ENCODE measurements at regions of chr1 and their contacts with region 1.

Region 1: DNA sequence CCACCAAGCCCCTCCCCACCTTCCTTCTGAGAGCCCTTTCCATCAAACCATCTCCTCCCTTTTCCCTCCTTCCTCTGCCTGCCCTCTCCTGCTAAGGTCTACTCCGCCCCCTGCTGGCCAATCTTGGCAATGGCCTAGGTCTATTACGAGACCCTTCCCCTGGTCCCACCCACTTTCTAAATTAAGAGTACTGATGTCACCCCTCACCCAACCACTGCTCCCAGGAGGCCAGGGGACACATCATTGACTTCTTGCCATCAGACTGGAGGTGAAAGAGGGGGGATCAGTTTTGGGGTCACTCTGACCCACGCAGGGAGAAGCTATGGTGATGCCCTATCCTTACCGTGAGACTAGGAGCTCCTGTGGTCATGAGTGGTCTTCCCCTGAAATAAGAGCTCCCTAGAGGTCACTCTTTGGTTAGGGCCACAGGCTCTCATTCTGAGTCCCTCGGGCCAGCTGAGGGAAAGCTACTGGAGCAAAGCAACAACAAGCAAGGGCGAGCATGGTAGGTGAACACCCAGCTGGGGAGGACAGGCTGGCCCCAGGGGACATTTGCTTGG is 34.6 kb upstream of the S100A7 start:
- DNase-seq: peak; percentile 75 to 82 (median 79)
- ATAC-seq: peak; percentile 96
- H3K4me3 ChIP-seq: no peak overlapping the region
- H3K27ac ChIP-seq: no peak overlapping the region
- H3K4me1 ChIP-seq: no peaks in the 10 kb centered on the region
- H3K27me3 ChIP-seq: peaks cover 11 to 21% of the 10 kb centered on the region in 2 experiments; a peak in 4 of 5 replicates
- CTCF ChIP-seq: peak; percentile 88 to 94 (median 93)
- EP300 ChIP-seq: no peak
- POLR2A ChIP-seq: no peak
- RAD21 ChIP-seq: peak; percentile 93 to 98

Region 2: DNA sequence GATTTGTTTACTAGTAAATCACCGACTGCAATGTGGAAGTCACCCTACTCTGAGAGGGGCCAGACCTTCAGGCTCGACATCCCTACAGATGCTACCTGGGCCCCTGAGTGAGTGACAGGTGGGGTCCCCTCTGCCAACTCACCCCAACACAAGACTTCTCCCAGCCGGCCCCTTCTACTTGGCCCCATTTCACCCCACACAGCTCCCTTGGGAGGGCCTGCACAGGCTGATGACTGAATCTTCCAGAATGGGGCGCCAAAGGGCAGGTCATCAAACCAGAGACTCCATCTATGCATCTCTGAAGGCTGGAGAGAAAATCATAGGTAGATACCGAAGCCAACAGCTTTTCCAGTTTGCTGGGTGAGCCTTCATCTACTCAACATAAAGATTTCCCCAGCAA is 94.8 kb before region 1 on chr1:
- CTCF ChIA-PET with region 1: interaction called, 28 read pairs
- POLR2A ChIA-PET with region 1: interaction called, 7 read pairs
- in situ Hi-C with region 1: no loop called
- intact Hi-C with region 1: loop called (anchors 1 kb)
- DNase-seq: peak in 3 of 4 experiments; percentile 30 to 44 (median 37)
- ATAC-seq: peak; percentile 90
- H3K4me3 ChIP-seq: no peak overlapping the region
- H3K27ac ChIP-seq: no peak overlapping the region
- H3K4me1 ChIP-seq: no peaks in the 10 kb centered on the region
- H3K27me3 ChIP-seq: peaks cover 31 to 64% of the 10 kb centered on the region in 2 experiments; a peak in 4 of 5 replicates
- CTCF ChIP-seq: peak; percentile 55 to 63 (median 61)
- EP300 ChIP-seq: no peak
- POLR2A ChIP-seq: no peak
- RAD21 ChIP-seq: peak; percentile 40 to 83

Region 3: GRCh38 chr1:153428790-153429189 is 66.3 kb before region 1 on chr1:
- CTCF ChIA-PET with region 1: no interaction called
- POLR2A ChIA-PET with region 1: no interaction called
- in situ Hi-C with region 1: no loop called
- intact Hi-C with region 1: loop called (anchors 2 kb)
- DNase-seq: no peak
- ATAC-seq: no peak
- H3K4me3 ChIP-seq: no peak overlapping the region
- H3K27ac ChIP-seq: no peak overlapping the region
- H3K4me1 ChIP-seq: peaks cover 27 to 35% of the 10 kb centered on the region in 2 experiments
- H3K27me3 ChIP-seq: peaks cover 0 to 6% of the 10 kb centered on the region in 2 experiments; a peak in 3 of 5 replicates
- CTCF ChIP-seq: peak in 2 of 3 experiments; percentile 9 to 21; a peak in 3 of 6 replicates
- EP300 ChIP-seq: no peak
- POLR2A ChIP-seq: no peak
- RAD21 ChIP-seq: peak in 1 of 2 experiments; percentile 31; a peak in 2 of 4 replicates